ENCODE measurements at regions of chr12 and their contacts with region 1.

Region 1: GRCh38 chr12:22443379-22444316 is 100.7 kb downstream of the C2CD5 start:
- DNase-seq: peak; percentile 83
- ATAC-seq: peak; percentile 99
- H3K4me3 ChIP-seq: no peak overlapping the region
- H3K4me3 Mint-ChIP-seq: no peak overlapping the region
- H3K27ac ChIP-seq: no peak overlapping the region
- H3K27ac Mint-ChIP-seq: no peak overlapping the region
- H3K4me1 ChIP-seq: peaks cover 0 to 3% of the 10 kb centered on the region in 2 donors
- H3K4me1 Mint-ChIP-seq: no peaks in the 10 kb centered on the region
- H3K27me3 ChIP-seq: no peaks in the 10 kb centered on the region
- H3K27me3 Mint-ChIP-seq: no peaks in the 10 kb centered on the region
- CTCF ChIP-seq: peak; percentile 87

Region 2: GRCh38 chr12:21248679-21249078 is 1195.0 kb before region 1 on chr12:
- CTCF ChIA-PET with region 1: no interaction called
- POLR2A ChIA-PET with region 1: no interaction called
- intact Hi-C with region 1: loop called (anchors 5 kb)
- DNase-seq: no peak
- ATAC-seq: no peak
- H3K4me3 ChIP-seq: no peak overlapping the region
- H3K4me3 Mint-ChIP-seq: no peak overlapping the region
- H3K27ac ChIP-seq: no peak overlapping the region
- H3K27ac Mint-ChIP-seq: no peak overlapping the region
- H3K4me1 ChIP-seq: no peaks in the 10 kb centered on the region
- H3K4me1 Mint-ChIP-seq: no peaks in the 10 kb centered on the region
- H3K27me3 ChIP-seq: no peaks in the 10 kb centered on the region
- H3K27me3 Mint-ChIP-seq: no peaks in the 10 kb centered on the region
- CTCF ChIP-seq: peak; percentile 18

Region 3: DNA sequence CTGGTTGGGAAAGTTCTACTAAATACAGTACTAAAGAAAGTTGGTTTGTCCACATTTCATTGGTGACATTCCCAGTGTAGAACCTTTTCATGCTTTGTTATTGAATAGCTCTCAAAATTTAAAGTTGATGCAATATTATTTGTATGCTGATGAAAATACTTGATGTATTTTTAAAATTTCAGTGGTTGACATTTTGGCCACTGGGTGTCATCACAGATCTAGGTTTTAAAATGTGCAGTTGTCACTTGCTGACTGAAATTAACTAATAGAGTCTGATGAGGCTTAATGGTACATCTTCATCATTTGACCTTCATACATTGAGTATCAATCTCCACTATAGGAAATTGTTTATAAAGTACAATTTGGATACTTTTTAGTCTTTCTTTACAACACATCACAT is 360.5 kb before region 1 on chr12:
- CTCF ChIA-PET with region 1: interaction called, 32 read pairs
- POLR2A ChIA-PET with region 1: no interaction called
- intact Hi-C with region 1: no loop called
- DNase-seq: peak; percentile 56
- ATAC-seq: no peak
- H3K4me3 ChIP-seq: no peak overlapping the region
- H3K4me3 Mint-ChIP-seq: no peak overlapping the region
- H3K27ac ChIP-seq: no peak overlapping the region
- H3K27ac Mint-ChIP-seq: no peak overlapping the region
- H3K4me1 ChIP-seq: no peaks in the 10 kb centered on the region
- H3K4me1 Mint-ChIP-seq: no peaks in the 10 kb centered on the region
- H3K27me3 ChIP-seq: no peaks in the 10 kb centered on the region
- H3K27me3 Mint-ChIP-seq: peaks cover 2% of the 10 kb centered on the region
- CTCF ChIP-seq: peak; percentile 70

Region 4: GRCh38 chr12:22121227-22121626 is 322.4 kb before region 1 on chr12:
- CTCF ChIA-PET with region 1: interaction called, 10 read pairs
- POLR2A ChIA-PET with region 1: no interaction called
- intact Hi-C with region 1: no loop called
- DNase-seq: peak; percentile 54
- ATAC-seq: peak; percentile 39
- H3K4me3 ChIP-seq: no peak overlapping the region
- H3K4me3 Mint-ChIP-seq: no peak overlapping the region
- H3K27ac ChIP-seq: no peak overlapping the region
- H3K27ac Mint-ChIP-seq: no peak overlapping the region
- H3K4me1 ChIP-seq: peaks cover 0 to 5% of the 10 kb centered on the region in 2 donors
- H3K4me1 Mint-ChIP-seq: peaks cover 4% of the 10 kb centered on the region
- H3K27me3 ChIP-seq: peaks cover 0 to 6% (median 1%) of the 10 kb centered on the region in 4 experiments
- H3K27me3 Mint-ChIP-seq: peaks cover 12% of the 10 kb centered on the region
- CTCF ChIP-seq: peak; percentile 37

Region 5: DNA sequence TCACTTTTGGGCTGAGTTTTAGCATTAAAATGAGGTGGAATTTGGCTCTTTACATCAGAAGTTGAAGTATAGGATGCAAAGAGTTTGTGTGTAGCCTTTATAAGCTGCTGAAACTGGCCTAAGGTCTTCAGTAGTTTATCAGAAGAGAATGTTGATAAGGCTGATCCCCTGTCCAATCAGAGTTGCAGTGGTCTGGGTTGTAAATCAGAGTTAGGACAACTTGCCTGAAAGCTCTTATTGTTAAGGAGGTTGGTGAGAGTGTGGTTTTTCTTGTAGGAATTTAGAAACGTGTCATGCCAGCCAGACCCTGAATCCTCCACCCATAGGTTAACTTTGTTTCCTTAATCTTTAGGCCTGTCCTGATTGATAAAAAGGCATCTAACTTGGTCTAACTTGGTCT is 252.7 kb before region 1 on chr12:
- CTCF ChIA-PET with region 1: no interaction called
- POLR2A ChIA-PET with region 1: no interaction called
- intact Hi-C with region 1: no loop called
- DNase-seq: no peak
- ATAC-seq: no peak
- H3K4me3 ChIP-seq: no peak overlapping the region
- H3K4me3 Mint-ChIP-seq: no peak overlapping the region
- H3K27ac ChIP-seq: no peak overlapping the region
- H3K27ac Mint-ChIP-seq: no peak overlapping the region
- H3K4me1 ChIP-seq: no peaks in the 10 kb centered on the region
- H3K4me1 Mint-ChIP-seq: no peaks in the 10 kb centered on the region
- H3K27me3 ChIP-seq: peaks cover 0 to 3% (median 0%) of the 10 kb centered on the region in 4 experiments
- H3K27me3 Mint-ChIP-seq: peaks cover 6% of the 10 kb centered on the region
- CTCF ChIP-seq: no peak

Region 6: DNA sequence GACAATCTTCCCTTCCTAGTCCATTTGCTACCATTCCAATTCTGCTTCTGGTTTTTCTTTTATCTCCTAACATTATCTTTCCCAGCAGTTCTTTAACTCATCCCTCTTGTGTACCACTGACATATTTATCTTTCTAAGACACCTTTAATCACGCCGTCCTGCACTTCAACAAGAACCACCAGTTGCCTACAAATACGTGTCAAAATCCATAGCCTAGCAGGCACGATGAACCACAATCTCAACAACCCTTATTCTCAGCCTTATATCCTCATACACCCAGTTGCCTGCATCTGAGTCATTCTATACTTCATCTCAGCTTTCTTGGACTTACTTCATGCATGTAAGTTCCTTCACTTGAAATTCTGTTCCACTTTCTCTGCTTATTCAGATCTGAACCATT is 92.8 kb before region 1 on chr12:
- CTCF ChIA-PET with region 1: no interaction called
- POLR2A ChIA-PET with region 1: no interaction called
- intact Hi-C with region 1: no loop called
- DNase-seq: no peak
- ATAC-seq: no peak
- H3K4me3 ChIP-seq: no peak overlapping the region
- H3K4me3 Mint-ChIP-seq: no peak overlapping the region
- H3K27ac ChIP-seq: no peak overlapping the region
- H3K27ac Mint-ChIP-seq: no peak overlapping the region
- H3K4me1 ChIP-seq: no peaks in the 10 kb centered on the region
- H3K4me1 Mint-ChIP-seq: no peaks in the 10 kb centered on the region
- H3K27me3 ChIP-seq: no peaks in the 10 kb centered on the region
- H3K27me3 Mint-ChIP-seq: peaks cover 8% of the 10 kb centered on the region
- CTCF ChIP-seq: no peak

Region 7: GRCh38 chr12:22431693-22432251 is 11.9 kb before region 1 on chr12:
- CTCF ChIA-PET with region 1: no interaction called
- POLR2A ChIA-PET with region 1: no interaction called
- intact Hi-C with region 1: no loop called
- DNase-seq: no peak
- ATAC-seq: no peak
- H3K4me3 ChIP-seq: no peak overlapping the region
- H3K4me3 Mint-ChIP-seq: peak overlapping the region; percentile 57
- H3K27ac ChIP-seq: no peak overlapping the region
- H3K27ac Mint-ChIP-seq: no peak overlapping the region
- H3K4me1 ChIP-seq: peaks cover 0 to 4% of the 10 kb centered on the region in 2 donors
- H3K4me1 Mint-ChIP-seq: peaks cover 6% of the 10 kb centered on the region
- H3K27me3 ChIP-seq: no peaks in the 10 kb centered on the region
- H3K27me3 Mint-ChIP-seq: no peaks in the 10 kb centered on the region
- CTCF ChIP-seq: no peak

Region 8: GRCh38 chr12:22459838-22460490 is 16.3 kb after region 1 on chr12:
- CTCF ChIA-PET with region 1: interaction called, 33 read pairs
- POLR2A ChIA-PET with region 1: no interaction called
- intact Hi-C with region 1: no loop called
- DNase-seq: peak; percentile 57
- ATAC-seq: peak; percentile 49
- H3K4me3 ChIP-seq: no peak overlapping the region
- H3K4me3 Mint-ChIP-seq: no peak overlapping the region
- H3K27ac ChIP-seq: no peak overlapping the region
- H3K27ac Mint-ChIP-seq: no peak overlapping the region
- H3K4me1 ChIP-seq: peaks cover 0 to 3% of the 10 kb centered on the region in 2 donors
- H3K4me1 Mint-ChIP-seq: peaks cover 11% of the 10 kb centered on the region
- H3K27me3 ChIP-seq: no peaks in the 10 kb centered on the region
- H3K27me3 Mint-ChIP-seq: no peaks in the 10 kb centered on the region
- CTCF ChIP-seq: peak; percentile 83